AG04449 (cell line): ENCODE measurements at regions of chr22 and their contacts with region 1.

Region 1: DNA sequence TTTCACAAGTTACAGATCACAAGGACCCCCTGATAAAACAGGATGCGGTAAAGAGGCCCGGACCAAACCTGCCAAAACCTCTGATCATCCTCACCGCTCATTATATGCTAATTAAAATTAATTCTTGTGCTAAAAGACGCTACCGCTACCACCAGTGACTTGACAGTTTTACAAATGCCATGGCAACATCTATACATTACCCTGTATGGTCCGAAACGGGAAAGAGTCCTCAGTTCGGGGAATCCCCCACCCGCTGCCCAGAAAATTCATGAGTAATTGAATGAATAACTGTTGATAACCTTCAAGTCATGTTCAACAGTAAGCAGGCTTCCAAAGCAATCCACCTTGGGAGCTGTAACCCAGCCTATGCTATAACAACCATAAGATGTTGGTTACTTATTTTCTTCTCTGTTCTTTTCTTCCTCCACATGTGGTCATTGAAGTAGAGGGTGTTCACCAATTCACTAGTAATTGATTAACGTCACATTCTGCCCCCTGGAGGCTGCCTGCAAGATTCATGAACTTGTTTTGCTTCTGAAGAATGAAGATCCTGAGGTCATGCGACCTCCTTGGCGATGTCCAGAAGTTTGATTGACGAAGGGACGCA is 20.6 kb downstream of the APOBEC3H start:
- DNase-seq: no peak
- H3K4me3 ChIP-seq: no peak overlapping the region
- CTCF ChIP-seq: peak; percentile 38

Region 2: DNA sequence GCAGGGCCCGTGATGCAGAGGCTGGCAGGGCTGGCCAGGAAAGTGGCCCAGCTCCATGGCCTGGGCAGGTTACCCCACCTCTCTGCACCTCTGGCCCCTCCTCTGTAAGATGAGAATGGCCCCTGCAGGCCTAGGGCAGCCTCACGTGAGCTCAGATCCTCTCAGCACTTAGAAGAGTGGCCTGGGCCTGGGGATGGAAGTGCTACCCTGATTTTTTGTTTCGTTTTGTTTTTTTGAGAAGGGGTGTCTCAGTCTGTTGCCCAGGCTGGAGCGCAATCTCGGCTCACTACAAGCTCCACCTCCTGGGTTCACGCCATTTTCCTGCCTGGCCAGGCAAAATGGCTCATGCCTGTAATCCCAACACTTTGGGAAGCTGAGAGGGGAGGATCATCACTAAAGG is 19.7 kb before region 1 on chr22:
- CTCF ChIA-PET with region 1: interaction called, 10 read pairs
- POLR2A ChIA-PET with region 1: no interaction called
- DNase-seq: no peak
- H3K4me3 ChIP-seq: no peak overlapping the region
- CTCF ChIP-seq: no peak

Region 3: GRCh38 chr22:39283322-39284004 is 165.8 kb after region 1 on chr22:
- CTCF ChIA-PET with region 1: no interaction called
- POLR2A ChIA-PET with region 1: no interaction called
- DNase-seq: no peak
- H3K4me3 ChIP-seq: no peak overlapping the region
- CTCF ChIP-seq: no peak